ENCODE measurements at regions of chr17 and their contacts with region 1.

Region 1: GRCh38 chr17:74786431-74787055 is 10.4 kb upstream of the NAT9 start:
- H3K4me3 ChIP-seq: no peak overlapping the region
- H3K27ac ChIP-seq: no peak overlapping the region
- H3K4me1 ChIP-seq: no peaks in the 10 kb centered on the region
- CTCF ChIP-seq: no peak

Region 2: GRCh38 chr17:74742153-74742515 is 44.4 kb before region 1 on chr17:
- CTCF ChIA-PET with region 1: interaction called, 62 read pairs
- POLR2A ChIA-PET with region 1: no interaction called
- H3K4me3 ChIP-seq: no peak overlapping the region
- H3K27ac ChIP-seq: no peak overlapping the region
- H3K4me1 ChIP-seq: peaks cover 2% of the 10 kb centered on the region; the same call in 1 of the 2 replicates
- CTCF ChIP-seq: no peak

Region 3: GRCh38 chr17:74770498-74771318 is 15.8 kb before region 1 on chr17:
- CTCF ChIA-PET with region 1: interaction called, 120 read pairs
- POLR2A ChIA-PET with region 1: no interaction called
- H3K4me3 ChIP-seq: no peak overlapping the region
- H3K27ac ChIP-seq: no peak overlapping the region
- H3K4me1 ChIP-seq: no peaks in the 10 kb centered on the region
- CTCF ChIP-seq: peak; percentile 88

Region 4: DNA sequence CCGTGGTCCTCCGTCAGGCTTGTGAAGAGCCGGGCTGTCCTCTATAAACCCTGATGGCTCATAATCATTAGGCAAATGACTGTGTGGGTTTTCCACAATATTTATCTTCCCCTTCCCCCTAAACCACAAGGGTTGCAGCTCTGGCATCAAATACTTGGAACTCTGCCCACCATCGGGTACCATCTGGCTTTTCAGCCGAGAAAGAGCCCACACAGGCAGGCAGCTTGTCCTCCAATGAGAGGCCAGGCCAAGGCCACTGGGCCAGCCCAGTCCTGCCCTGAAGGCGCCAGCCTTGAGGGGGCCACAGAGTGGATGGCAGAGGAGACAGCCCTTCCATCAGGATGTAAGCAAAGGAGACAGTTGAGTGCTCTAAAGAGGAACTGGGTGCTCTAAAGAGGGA is 21.4 kb after region 1 on chr17:
- CTCF ChIA-PET with region 1: interaction called, 41 read pairs
- POLR2A ChIA-PET with region 1: no interaction called
- H3K4me3 ChIP-seq: no peak overlapping the region
- H3K27ac ChIP-seq: no peak overlapping the region
- H3K4me1 ChIP-seq: no peaks in the 10 kb centered on the region
- CTCF ChIP-seq: no peak

Region 5: DNA sequence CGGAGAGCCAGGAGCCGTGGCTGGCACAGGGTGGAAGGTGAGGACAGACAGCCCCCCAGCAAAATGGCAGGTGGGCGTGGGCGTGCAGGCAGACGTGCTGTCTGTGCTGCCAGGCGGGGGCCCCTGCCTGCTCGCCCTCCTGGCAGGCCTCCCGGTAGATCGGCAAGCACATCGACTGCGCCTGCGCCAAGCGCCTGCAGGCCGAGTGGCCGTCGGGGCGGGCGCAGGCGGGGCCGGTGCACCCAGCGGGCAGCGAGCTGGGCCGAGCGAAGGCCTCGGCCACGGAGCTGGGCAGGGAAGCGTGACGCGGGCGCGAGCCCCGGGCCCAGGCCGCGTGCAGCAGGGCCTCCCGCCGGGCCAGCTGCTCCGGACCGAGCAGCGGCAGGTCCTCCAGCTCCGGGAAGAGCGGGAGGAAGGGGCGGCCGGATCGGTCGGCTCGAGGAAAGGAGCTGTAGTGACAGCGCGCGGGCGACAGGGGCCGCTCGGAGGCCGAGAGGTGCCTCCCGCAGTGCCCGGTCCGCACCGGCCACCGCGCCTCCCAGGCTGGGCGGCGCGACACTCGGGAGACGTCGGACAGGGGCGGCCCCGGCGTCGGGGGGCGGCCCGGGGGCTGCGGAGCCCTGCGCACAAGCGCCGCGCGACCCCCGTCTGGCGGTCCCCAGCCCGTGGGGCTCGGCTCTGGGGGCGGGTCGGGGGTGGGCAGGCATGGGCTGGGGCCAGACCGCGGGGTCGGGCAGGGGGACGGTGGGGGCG is 56.2 kb after region 1 on chr17:
- CTCF ChIA-PET with region 1: interaction called, 25 read pairs
- POLR2A ChIA-PET with region 1: interaction called, 5 read pairs
- H3K4me3 ChIP-seq: peak overlapping the region; percentile 27
- H3K27ac ChIP-seq: peak overlapping the region; percentile 46; the same call in 1 of the 2 replicates
- H3K4me1 ChIP-seq: 0 out of 2 replicates have a peak, but pooled peaks cover 3% of the 10 kb centered on the region
- CTCF ChIP-seq: no peak

Region 6: DNA sequence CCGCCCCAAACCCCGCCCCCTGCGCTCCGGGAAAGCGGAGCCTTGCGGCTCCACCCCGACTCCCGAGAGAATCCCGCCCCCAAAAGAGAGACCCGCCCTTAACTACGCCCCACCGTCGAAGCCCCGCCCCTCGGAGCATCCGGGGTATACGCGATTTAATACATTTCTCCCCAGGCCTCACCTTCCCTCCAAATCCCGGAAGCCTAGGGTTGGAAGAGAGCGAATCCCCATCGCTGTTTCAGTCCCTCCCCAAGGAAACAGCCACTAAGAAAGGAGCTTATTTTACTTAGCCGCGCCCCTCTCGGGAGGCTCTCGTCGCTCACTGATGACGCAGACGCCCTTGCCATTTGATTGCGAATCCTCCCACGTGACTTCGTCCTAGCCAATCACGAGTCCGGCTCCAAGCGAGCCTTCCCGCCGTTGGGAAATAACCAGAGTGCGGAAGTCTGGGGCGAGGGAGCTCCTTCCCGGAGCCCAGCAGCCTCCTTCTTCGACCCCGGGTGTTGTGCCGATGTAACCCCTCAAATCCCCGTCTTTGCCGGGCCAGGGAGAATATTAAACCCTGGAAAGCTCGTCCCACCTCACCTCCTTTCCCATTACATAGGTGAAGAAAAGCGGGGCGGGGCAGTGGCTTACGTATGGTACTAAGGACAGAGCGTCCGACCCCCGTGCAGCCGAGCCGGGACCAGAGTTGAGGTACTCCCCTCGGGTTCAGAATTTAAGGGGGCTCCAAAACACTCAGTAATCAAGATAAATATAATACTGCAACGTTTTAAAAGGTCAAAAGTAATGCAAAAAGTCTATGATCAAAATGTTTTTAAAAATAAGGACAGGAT is 86.7 kb after region 1 on chr17:
- CTCF ChIA-PET with region 1: interaction called, 40 read pairs
- POLR2A ChIA-PET with region 1: interaction called, 6 read pairs
- H3K4me3 ChIP-seq: peak overlapping the region; percentile 83
- H3K27ac ChIP-seq: peak overlapping the region; percentile 62; the same call in 1 of the 2 replicates
- H3K4me1 ChIP-seq: peaks cover 10% of the 10 kb centered on the region
- CTCF ChIP-seq: no peak

Region 7: GRCh38 chr17:74907012-74907411 is 120.5 kb after region 1 on chr17:
- CTCF ChIA-PET with region 1: no interaction called
- POLR2A ChIA-PET with region 1: no interaction called
- H3K4me3 ChIP-seq: no peak overlapping the region
- H3K27ac ChIP-seq: no peak overlapping the region
- H3K4me1 ChIP-seq: no peaks in the 10 kb centered on the region
- CTCF ChIP-seq: no peak

Measured in HEK293 (cell line).